Activated naive CD4-positive, alpha-beta T cell treated with anti-CD3 and anti-CD28 coated beads for 36 hours (primary cell): ENCODE measurements at regions of chr1 and their contacts with region 1.

Region 1: GRCh38 chr1:117059678-117060440 is at the start of gene TTF2:
- DNase-seq: peak; percentile 98
- H3K4me3 Mint-ChIP-seq: no peak within 1 kb of the TSS
- H3K27ac Mint-ChIP-seq: no peak within 1 kb of the TSS
- H3K4me1 Mint-ChIP-seq: peaks cover 41% of the 10 kb centered on the region
- H3K27me3 Mint-ChIP-seq: no peaks in the 10 kb centered on the region
- total RNA-seq, gene TTF2: 113 to 122 TPM

Region 2: DNA sequence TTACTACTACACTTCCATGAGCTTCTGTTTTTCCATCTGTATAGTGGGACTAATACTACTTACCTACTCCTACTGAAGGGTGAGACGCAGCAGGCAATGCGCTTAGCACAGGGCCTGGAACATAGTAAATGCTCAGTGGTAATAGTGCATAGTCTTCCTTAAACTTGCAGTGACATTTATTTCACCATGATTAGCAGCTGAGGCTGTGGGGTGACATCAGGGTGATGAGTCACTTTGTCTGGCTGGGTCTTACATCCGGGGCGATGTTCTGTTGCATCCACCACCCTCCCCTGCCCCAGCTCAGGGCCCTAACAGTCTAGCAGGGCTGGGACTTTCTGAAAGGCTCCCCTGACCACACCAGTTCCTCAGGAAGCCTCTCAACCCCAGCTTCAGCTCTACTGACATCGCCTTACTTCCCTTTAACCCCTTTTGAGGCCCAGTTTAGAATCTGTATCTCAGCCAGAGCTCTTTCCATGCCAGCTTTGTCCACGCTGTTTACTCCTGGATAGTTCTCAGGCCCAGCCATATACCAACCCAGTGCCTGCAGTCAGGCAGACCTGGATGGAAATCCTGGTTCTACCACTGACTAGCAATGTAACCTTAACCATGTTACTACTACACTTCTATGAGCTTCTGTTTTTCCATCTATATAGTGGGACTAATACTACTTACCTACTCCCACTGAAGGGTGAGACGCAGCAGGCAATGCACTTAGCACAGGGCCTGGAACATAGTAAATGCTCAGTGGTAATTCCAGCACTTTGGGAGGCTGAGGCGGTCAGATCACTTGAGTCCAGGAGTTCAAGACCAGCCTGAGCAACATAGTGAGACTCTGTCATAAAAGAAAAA is 555.3 kb before region 1 on chr1:
- CTCF ChIA-PET with region 1: no interaction called
- intact Hi-C with region 1: loop called (anchors 2 kb)
- DNase-seq: peak; percentile 92
- H3K4me3 Mint-ChIP-seq: peak overlapping the region; percentile 1
- H3K27ac Mint-ChIP-seq: peak overlapping the region; percentile 82
- H3K4me1 Mint-ChIP-seq: peaks cover 53% of the 10 kb centered on the region
- H3K27me3 Mint-ChIP-seq: no peaks in the 10 kb centered on the region

Region 3: GRCh38 chr1:116737020-116737854 is 322.6 kb before region 1 on chr1:
- CTCF ChIA-PET with region 1: interaction called, 7 read pairs
- intact Hi-C with region 1: loop called (anchors 1 kb)
- DNase-seq: peak; percentile 84
- H3K4me3 Mint-ChIP-seq: peak overlapping the region; percentile 71
- H3K27ac Mint-ChIP-seq: peak overlapping the region; percentile 100
- H3K4me1 Mint-ChIP-seq: peaks cover 61% of the 10 kb centered on the region
- H3K27me3 Mint-ChIP-seq: no peaks in the 10 kb centered on the region

Region 4: GRCh38 chr1:116817582-116818064 is 242.2 kb before region 1 on chr1:
- CTCF ChIA-PET with region 1: interaction called, 7 read pairs
- intact Hi-C with region 1: loop called (anchors 1 kb)
- DNase-seq: peak; percentile 91
- H3K4me3 Mint-ChIP-seq: no peak overlapping the region
- H3K27ac Mint-ChIP-seq: peak overlapping the region; percentile 98
- H3K4me1 Mint-ChIP-seq: peaks cover 66% of the 10 kb centered on the region
- H3K27me3 Mint-ChIP-seq: no peaks in the 10 kb centered on the region

Region 5: GRCh38 chr1:116881879-116882520 is 177.9 kb before region 1 on chr1:
- CTCF ChIA-PET with region 1: interaction called, 3 read pairs
- intact Hi-C with region 1: loop called (anchors 2 kb)
- DNase-seq: peak; percentile 77
- H3K4me3 Mint-ChIP-seq: no peak overlapping the region
- H3K27ac Mint-ChIP-seq: no peak overlapping the region
- H3K4me1 Mint-ChIP-seq: peaks cover 12% of the 10 kb centered on the region
- H3K27me3 Mint-ChIP-seq: no peaks in the 10 kb centered on the region

Region 6: GRCh38 chr1:117121776-117122697 is 62.2 kb after region 1 on chr1:
- CTCF ChIA-PET with region 1: interaction called, 3 read pairs
- intact Hi-C with region 1: loop called (anchors 1 kb)
- DNase-seq: peak; percentile 90
- H3K4me3 Mint-ChIP-seq: peak overlapping the region; percentile 73
- H3K27ac Mint-ChIP-seq: no peak overlapping the region
- H3K4me1 Mint-ChIP-seq: no peaks in the 10 kb centered on the region
- H3K27me3 Mint-ChIP-seq: peaks cover 12% of the 10 kb centered on the region

Region 7: DNA sequence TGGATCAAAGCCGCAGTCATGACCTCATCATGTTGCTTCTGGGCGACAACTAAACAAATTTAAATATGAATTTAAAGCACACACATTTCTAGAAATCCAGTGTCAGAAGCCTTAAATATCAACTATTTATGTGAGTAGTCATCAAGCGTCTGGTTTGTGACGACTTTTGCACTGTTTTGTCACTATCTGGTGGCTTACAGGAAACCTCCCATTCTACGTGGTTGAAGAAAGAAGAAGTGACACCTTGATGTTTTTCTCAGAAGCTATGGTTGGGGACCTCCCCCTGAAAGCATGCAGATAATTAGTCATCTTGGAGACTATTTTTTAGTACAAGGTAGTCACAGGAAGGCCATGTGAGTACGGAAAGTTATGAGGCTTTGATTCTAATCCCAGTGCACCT is 604.5 kb after region 1 on chr1:
- CTCF ChIA-PET with region 1: no interaction called
- intact Hi-C with region 1: loop called (anchors 2 kb)
- DNase-seq: peak; percentile 89
- H3K4me3 Mint-ChIP-seq: no peak overlapping the region
- H3K27ac Mint-ChIP-seq: peak overlapping the region; percentile 71
- H3K4me1 Mint-ChIP-seq: peaks cover 71% of the 10 kb centered on the region
- H3K27me3 Mint-ChIP-seq: peaks cover 6% of the 10 kb centered on the region